Naive thymus-derived CD4-positive, alpha-beta T cell (primary cell): ENCODE measurements at regions of chr11 and their contacts with region 1.

Region 1: GRCh38 chr11:14578541-14578956 is 58.4 kb upstream of the PSMA1 start:
- DNase-seq: peak in 8 of 9 donors; percentile 57 to 95 (median 92)
- ATAC-seq: peak; percentile 99
- H3K4me3 ChIP-seq: peak overlapping the region; percentile 22
- H3K4me3 Mint-ChIP-seq: peak overlapping the region; percentile 40 to 85 (median 62)
- H3K27ac ChIP-seq: peak overlapping the region; percentile 79
- H3K27ac Mint-ChIP-seq: peak overlapping the region; percentile 92 to 96 (median 95)
- H3K4me1 ChIP-seq: peaks cover 39 to 41% of the 10 kb centered on the region in 2 donors
- H3K4me1 Mint-ChIP-seq: peaks cover 46 to 71% (median 63%) of the 10 kb centered on the region in 7 donors
- H3K27me3 ChIP-seq: no peaks in the 10 kb centered on the region
- H3K27me3 Mint-ChIP-seq: no peaks in the 10 kb centered on the region

Region 2: DNA sequence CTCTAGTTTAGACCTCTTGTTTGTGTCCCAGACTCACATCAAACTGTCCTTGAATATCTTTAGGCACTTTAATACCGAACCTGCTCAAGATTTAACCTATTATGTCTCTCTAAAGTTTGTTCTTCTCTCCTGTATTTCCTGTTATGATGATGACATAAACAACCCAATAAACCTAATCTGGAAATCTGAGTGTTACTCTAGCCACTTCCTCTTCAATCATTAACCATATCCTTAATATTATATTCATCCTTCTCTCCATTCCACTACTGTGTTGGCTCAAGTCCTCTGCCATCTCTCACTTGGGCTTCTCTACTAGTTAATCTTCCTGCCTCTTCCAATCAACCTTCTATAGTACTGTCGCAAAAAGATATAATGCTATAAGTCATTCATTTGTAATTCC is 114.9 kb before region 1 on chr11:
- CTCF ChIA-PET with region 1: no interaction called
- POLR2A ChIA-PET with region 1: no interaction called
- intact Hi-C with region 1: no loop called
- DNase-seq: no peak
- ATAC-seq: no peak
- H3K4me3 ChIP-seq: no peak overlapping the region
- H3K4me3 Mint-ChIP-seq: no peak overlapping the region
- H3K27ac ChIP-seq: peak overlapping the region; percentile 25
- H3K27ac Mint-ChIP-seq: no peak overlapping the region
- H3K4me1 ChIP-seq: peaks cover 3 to 17% of the 10 kb centered on the region in 2 donors
- H3K4me1 Mint-ChIP-seq: peaks cover 2 to 15% (median 8%) of the 10 kb centered on the region in 7 donors
- H3K27me3 ChIP-seq: no peaks in the 10 kb centered on the region
- H3K27me3 Mint-ChIP-seq: no peaks in the 10 kb centered on the region

Region 3: GRCh38 chr11:14537134-14537599 is 41.4 kb before region 1 on chr11:
- CTCF ChIA-PET with region 1: no interaction called
- POLR2A ChIA-PET with region 1: interaction called, 8 read pairs
- intact Hi-C with region 1: loop called (anchors 1 kb)
- DNase-seq: peak in 7 of 9 donors; percentile 39 to 74 (median 69)
- ATAC-seq: peak; percentile 93
- H3K4me3 ChIP-seq: no peak overlapping the region
- H3K4me3 Mint-ChIP-seq: peak overlapping the region in 9 of 10 donors; percentile 48 to 86 (median 79)
- H3K27ac ChIP-seq: peak overlapping the region; percentile 69
- H3K27ac Mint-ChIP-seq: peak overlapping the region; percentile 77 to 99 (median 90)
- H3K4me1 ChIP-seq: peaks cover 0 to 17% of the 10 kb centered on the region in 2 donors
- H3K4me1 Mint-ChIP-seq: peaks cover 9 to 51% (median 45%) of the 10 kb centered on the region in 7 donors
- H3K27me3 ChIP-seq: no peaks in the 10 kb centered on the region
- H3K27me3 Mint-ChIP-seq: no peaks in the 10 kb centered on the region

Region 4: DNA sequence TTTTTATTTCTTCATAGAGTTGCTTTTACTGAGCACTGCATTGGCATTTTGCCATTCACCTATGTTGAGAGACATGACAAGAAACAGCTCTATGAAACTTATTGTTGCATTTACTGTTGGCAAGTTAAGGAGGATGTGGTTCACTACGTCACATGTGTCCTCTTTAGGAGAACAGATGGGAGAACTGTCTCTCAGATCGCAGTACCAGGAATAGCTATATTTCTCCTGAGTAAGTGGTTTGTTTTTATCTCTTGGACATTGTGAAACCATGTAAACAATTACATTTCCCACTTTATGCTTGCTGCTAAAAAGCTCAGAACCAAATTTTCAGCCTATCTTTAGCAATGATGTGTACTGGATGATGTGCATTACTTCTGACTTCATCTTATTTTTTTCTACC is 23.6 kb before region 1 on chr11:
- CTCF ChIA-PET with region 1: interaction called, 5 read pairs
- POLR2A ChIA-PET with region 1: interaction called, 44 read pairs
- intact Hi-C with region 1: loop called (anchors 1 kb)
- DNase-seq: peak in 7 of 9 donors; percentile 76 to 92 (median 87)
- ATAC-seq: peak; percentile 95
- H3K4me3 ChIP-seq: no peak overlapping the region
- H3K4me3 Mint-ChIP-seq: peak overlapping the region in 9 of 10 donors; percentile 42 to 85 (median 65)
- H3K27ac ChIP-seq: peak overlapping the region; percentile 73
- H3K27ac Mint-ChIP-seq: peak overlapping the region; percentile 82 to 99 (median 95)
- H3K4me1 ChIP-seq: peaks cover 19 to 23% of the 10 kb centered on the region in 2 donors
- H3K4me1 Mint-ChIP-seq: peaks cover 23 to 72% (median 60%) of the 10 kb centered on the region in 7 donors
- H3K27me3 ChIP-seq: no peaks in the 10 kb centered on the region
- H3K27me3 Mint-ChIP-seq: no peaks in the 10 kb centered on the region

Region 5: GRCh38 chr11:14593684-14594083 is 15.1 kb after region 1 on chr11:
- CTCF ChIA-PET with region 1: no interaction called
- POLR2A ChIA-PET with region 1: interaction called, 3 read pairs
- intact Hi-C with region 1: loop called in 1 of 2 experiments (anchors 1 kb)
- DNase-seq: no peak
- ATAC-seq: no peak
- H3K4me3 ChIP-seq: no peak overlapping the region
- H3K4me3 Mint-ChIP-seq: peak overlapping the region in 1 of 10 donors; percentile 16
- H3K27ac ChIP-seq: no peak overlapping the region
- H3K27ac Mint-ChIP-seq: peak overlapping the region in 6 of 9 donors; percentile 1 to 17 (median 10)
- H3K4me1 ChIP-seq: no peaks in the 10 kb centered on the region
- H3K4me1 Mint-ChIP-seq: peaks cover 10 to 55% (median 44%) of the 10 kb centered on the region in 7 donors
- H3K27me3 ChIP-seq: no peaks in the 10 kb centered on the region
- H3K27me3 Mint-ChIP-seq: no peaks in the 10 kb centered on the region

Region 6: DNA sequence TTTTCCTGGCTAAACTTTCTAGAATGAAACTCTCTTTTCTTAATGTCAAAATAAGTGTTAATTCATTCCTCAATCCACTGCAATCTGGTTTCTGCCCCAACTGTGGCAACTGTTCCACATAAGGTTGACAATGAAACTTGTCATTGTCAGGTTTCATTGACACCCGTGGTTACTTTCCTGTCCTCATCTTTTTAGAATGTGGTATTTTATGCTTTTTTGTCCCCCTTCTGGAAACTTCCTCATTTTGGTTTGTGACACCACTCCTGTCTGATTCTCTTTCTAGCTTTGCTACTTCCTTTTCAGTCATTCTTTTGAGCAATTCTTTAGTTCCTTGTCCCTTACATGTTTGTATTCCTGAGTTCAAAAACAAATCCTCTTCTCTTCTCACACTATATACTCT is 57.6 kb after region 1 on chr11:
- CTCF ChIA-PET with region 1: interaction called, 14 read pairs
- POLR2A ChIA-PET with region 1: interaction called, 25 read pairs
- intact Hi-C with region 1: no loop called
- DNase-seq: peak in 3 of 9 donors; percentile 14 to 45 (median 41)
- ATAC-seq: peak; percentile 56
- H3K4me3 ChIP-seq: no peak overlapping the region
- H3K4me3 Mint-ChIP-seq: peak overlapping the region; percentile 6 to 65 (median 51)
- H3K27ac ChIP-seq: no peak overlapping the region
- H3K27ac Mint-ChIP-seq: peak overlapping the region; percentile 26 to 93 (median 77)
- H3K4me1 ChIP-seq: peaks cover 39 to 57% of the 10 kb centered on the region in 2 donors
- H3K4me1 Mint-ChIP-seq: peaks cover 39 to 77% (median 66%) of the 10 kb centered on the region in 7 donors
- H3K27me3 ChIP-seq: no peaks in the 10 kb centered on the region
- H3K27me3 Mint-ChIP-seq: no peaks in the 10 kb centered on the region